ENCODE measurements at regions of chr4 and their contacts with region 1.

Region 1: DNA sequence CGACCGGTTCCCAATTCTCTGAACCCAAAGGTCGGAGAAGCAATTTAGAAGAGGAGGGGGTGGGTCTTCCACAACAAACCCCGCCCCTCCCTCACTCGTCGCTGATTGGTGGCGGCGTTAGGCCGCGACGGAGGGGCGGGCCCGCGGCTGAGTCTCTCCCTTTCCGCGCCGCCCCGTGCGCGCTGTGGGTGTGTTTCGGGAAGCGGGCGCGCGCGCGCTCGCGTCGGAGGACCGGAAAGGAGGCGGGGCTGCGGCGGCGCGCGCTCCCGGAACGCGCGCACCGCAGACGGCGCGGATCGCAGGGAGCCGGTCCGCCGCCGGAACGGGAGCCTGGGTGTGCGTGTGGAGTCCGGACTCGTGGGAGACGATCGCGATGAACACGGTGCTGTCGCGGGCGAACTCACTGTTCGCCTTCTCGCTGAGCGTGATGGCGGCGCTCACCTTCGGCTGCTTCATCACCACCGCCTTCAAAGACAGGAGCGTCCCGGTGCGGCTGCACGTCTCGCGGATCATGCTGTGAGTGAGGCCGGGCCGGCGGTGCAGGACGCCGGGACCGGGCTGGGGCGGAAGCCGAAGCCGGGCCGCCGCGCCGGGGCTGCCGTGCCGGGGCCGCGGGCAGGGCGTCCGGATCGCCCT is at the start of gene SPCS3:
- DNase-seq: peak; percentile 98
- H3K4me3 ChIP-seq: peak within 1 kb of the TSS; percentile 99
- H3K27ac ChIP-seq: peak within 1 kb of the TSS; percentile 96
- H3K4me1 ChIP-seq: peaks cover 43% of the 10 kb centered on the region
- CTCF ChIP-seq: no peak
- total RNA-seq, gene SPCS3: 100 and 122 TPM in 2 replicates

Region 2: GRCh38 chr4:176013476-176014247 is 306.2 kb before region 1 on chr4:
- CTCF ChIA-PET with region 1: no interaction called
- POLR2A ChIA-PET with region 1: interaction called, 8 read pairs
- intact Hi-C with region 1: loop called (anchors 5 kb)
- DNase-seq: peak; percentile 79
- H3K4me3 ChIP-seq: peak overlapping the region; percentile 26
- H3K27ac ChIP-seq: peak overlapping the region; percentile 85
- H3K4me1 ChIP-seq: peaks cover 52% of the 10 kb centered on the region
- CTCF ChIP-seq: no peak

Region 3: DNA sequence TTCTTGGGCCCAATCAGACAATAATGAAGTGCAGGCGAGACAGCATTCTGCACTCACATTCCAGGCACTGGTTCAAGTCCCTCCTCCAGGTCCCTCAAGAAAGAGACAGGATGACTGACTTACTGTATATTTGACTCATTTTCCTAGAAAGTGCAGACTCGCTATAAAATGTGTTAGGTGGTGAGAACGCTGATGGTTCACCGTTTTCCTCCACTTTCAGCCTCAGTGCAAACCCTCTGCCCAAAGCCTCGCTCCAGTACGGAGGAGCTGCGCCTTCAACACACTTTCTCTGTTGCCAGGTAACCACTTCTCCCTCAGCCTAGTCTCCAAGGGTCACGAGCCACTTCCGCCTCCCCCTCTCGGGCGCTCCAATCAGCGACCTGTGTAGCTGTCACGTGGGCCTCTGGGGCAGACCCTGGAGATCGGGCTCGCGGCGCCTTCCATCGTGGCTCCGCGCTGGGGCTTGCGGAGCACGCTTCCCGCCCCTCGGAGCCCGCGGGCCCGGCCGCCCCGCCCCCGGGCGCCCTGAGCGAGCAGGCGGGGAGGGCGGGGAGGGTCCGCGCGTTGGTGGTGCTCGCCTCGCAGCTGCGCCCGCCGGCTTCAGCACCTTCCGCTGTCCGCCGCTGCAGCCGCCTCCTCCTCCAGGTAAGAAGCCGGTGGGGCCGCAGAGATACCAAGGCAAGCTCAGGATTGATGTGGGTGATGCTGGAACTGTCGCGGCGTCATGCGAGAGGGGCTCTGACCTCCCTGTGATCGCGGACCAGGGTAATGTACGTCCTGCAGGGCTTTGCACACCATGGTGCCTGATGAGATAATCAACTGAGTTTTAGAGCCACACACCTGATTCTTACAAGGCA is 254.2 kb before region 1 on chr4 and contains the start of gene WDR17:
- CTCF ChIA-PET with region 1: no interaction called
- POLR2A ChIA-PET with region 1: interaction called, 10 read pairs
- intact Hi-C with region 1: loop called (anchors 5 kb)
- DNase-seq: peak; percentile 90
- H3K4me3 ChIP-seq: peak within 1 kb of the TSS; percentile 69
- H3K27ac ChIP-seq: no peak within 1 kb of the TSS
- H3K4me1 ChIP-seq: no peaks in the 10 kb centered on the region
- CTCF ChIP-seq: no peak
- total RNA-seq, gene WDR17: 0.62 and 0.63 TPM in 2 replicates

Region 4: DNA sequence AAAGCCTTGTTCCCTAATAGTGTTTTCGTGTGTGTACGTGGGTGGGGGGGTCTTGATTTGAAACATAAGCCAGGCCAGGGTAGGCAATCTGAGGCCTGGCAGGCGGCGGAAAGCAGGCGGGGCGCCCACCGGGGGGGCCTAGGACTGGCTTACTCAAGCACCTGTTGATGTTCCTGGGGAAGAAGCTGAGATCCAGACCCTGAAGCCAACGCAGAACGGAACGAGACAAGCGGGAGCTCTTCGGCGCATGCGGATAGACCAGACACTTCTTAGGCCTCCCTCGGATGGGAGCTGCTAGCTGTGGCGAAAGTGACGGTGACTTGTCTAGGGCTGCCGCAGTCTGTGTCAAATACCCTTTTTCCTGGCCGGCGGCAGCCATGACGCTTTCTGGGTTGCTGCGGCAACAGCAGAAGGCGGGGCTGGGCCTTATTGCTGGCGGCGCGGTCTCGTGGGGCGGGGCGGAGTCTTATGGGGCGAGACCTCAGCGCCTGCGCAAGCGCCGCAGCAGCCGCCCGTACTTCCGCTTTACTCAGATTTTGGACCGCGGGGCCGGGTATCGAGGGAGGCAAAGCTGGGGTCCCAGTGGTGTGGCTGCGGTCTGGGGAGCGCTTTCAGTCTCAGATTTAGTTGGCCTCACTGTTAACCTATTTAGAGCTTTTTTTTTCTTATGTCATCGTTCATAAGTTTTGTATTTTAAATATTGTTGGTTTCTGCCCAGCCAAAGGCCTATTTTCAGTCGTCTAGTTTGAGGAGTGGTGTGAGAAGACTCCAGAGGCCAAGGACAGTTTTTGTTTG is 124.4 kb before region 1 on chr4 and contains the start of gene SPATA4:
- CTCF ChIA-PET with region 1: no interaction called
- POLR2A ChIA-PET with region 1: interaction called, 6 read pairs
- intact Hi-C with region 1: loop called (anchors 10 kb)
- DNase-seq: peak; percentile 85
- H3K4me3 ChIP-seq: peak within 1 kb of the TSS; percentile 55
- H3K27ac ChIP-seq: peak within 1 kb of the TSS; percentile 18
- H3K4me1 ChIP-seq: peaks cover 6% of the 10 kb centered on the region
- CTCF ChIP-seq: no peak
- total RNA-seq, gene SPATA4: not detected in 2 replicates

Region 5: GRCh38 chr4:176309046-176309445 is 10.8 kb before region 1 on chr4:
- CTCF ChIA-PET with region 1: no interaction called
- POLR2A ChIA-PET with region 1: interaction called, 35 read pairs
- intact Hi-C with region 1: loop called (anchors 1 kb)
- DNase-seq: peak; percentile 75
- H3K4me3 ChIP-seq: peak overlapping the region; percentile 37
- H3K27ac ChIP-seq: peak overlapping the region; percentile 60
- H3K4me1 ChIP-seq: peaks cover 39% of the 10 kb centered on the region
- CTCF ChIP-seq: no peak